ENCODE measurements at regions of chrX and their contacts with region 1.

Region 1: DNA sequence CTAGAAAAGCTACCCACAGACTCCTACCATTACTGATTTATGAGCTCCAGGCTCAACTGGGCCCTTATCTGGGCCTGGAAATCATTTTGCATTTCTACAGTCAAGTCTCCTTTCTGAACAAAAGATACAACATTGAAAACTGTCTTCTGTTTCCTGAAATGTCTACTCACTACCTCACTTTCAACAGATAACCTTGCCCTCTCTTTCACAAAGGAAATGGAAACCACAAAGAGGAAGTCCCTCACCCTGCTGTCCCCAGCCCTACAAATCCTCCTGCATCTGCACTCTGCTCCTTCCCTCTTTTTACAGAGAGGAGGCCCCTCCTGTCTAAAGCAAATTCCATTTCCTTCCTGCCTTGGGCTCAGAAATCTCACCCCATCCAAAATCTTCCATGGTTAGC is 24.8 kb upstream of the CYBB start:
- DNase-seq: no peak
- ATAC-seq: peak; percentile 93
- H3K4me3 Mint-ChIP-seq: no peak overlapping the region
- H3K27ac Mint-ChIP-seq: no peak overlapping the region
- H3K4me1 Mint-ChIP-seq: peaks cover 37% of the 10 kb centered on the region
- H3K27me3 Mint-ChIP-seq: no peaks in the 10 kb centered on the region
- CTCF ChIP-seq: no peak

Region 2: DNA sequence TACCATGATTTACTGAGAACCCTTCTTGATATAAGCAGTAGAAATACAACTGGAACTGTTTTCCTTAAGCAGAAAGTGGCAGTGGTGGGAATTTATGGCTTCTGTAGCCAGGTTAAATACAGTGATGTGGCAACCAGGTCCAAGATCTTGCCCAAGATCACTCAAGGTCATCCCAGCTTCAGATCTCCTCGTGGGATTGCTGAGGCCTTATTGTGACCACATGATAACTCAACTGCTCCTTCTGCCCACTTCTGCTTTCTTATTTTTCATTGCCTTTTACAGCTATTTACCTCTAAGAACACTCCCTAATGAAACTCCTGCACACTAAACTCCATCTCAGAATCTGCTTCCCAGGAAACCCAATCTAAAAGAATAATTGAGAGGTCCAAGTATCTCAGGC is 12.4 kb after region 1 on chrX:
- CTCF ChIA-PET with region 1: no interaction called
- POLR2A ChIA-PET with region 1: interaction called, 8 read pairs
- intact Hi-C with region 1: loop called (anchors 1 kb)
- DNase-seq: no peak
- ATAC-seq: peak; percentile 31
- H3K4me3 Mint-ChIP-seq: no peak overlapping the region
- H3K27ac Mint-ChIP-seq: peak overlapping the region; percentile 66
- H3K4me1 Mint-ChIP-seq: peaks cover 53% of the 10 kb centered on the region
- H3K27me3 Mint-ChIP-seq: no peaks in the 10 kb centered on the region
- CTCF ChIP-seq: no peak

Region 3: GRCh38 chrX:37776283-37776986 is 21.4 kb after region 1 on chrX:
- CTCF ChIA-PET with region 1: interaction called, 3 read pairs
- POLR2A ChIA-PET with region 1: interaction called, 38 read pairs
- intact Hi-C with region 1: loop called (anchors 1 kb)
- DNase-seq: no peak
- ATAC-seq: peak; percentile 73
- H3K4me3 Mint-ChIP-seq: peak overlapping the region; percentile 50
- H3K27ac Mint-ChIP-seq: peak overlapping the region; percentile 87
- H3K4me1 Mint-ChIP-seq: peaks cover 33% of the 10 kb centered on the region
- H3K27me3 Mint-ChIP-seq: no peaks in the 10 kb centered on the region
- CTCF ChIP-seq: no peak

Region 4: GRCh38 chrX:37958525-37959211 is 203.6 kb after region 1 on chrX:
- CTCF ChIA-PET with region 1: no interaction called
- POLR2A ChIA-PET with region 1: no interaction called
- intact Hi-C with region 1: no loop called
- DNase-seq: no peak
- ATAC-seq: no peak
- H3K4me3 Mint-ChIP-seq: no peak overlapping the region
- H3K27ac Mint-ChIP-seq: no peak overlapping the region
- H3K4me1 Mint-ChIP-seq: no peaks in the 10 kb centered on the region
- H3K27me3 Mint-ChIP-seq: no peaks in the 10 kb centered on the region
- CTCF ChIP-seq: no peak